ENCODE measurements at regions of chr12 and their contacts with region 1.

Region 1: GRCh38 chr12:63989301-63989845 is 144.9 kb downstream of the SRGAP1 start:
- DNase-seq: no peak
- H3K4me3 ChIP-seq: no peak overlapping the region
- H3K27ac ChIP-seq: no peak overlapping the region
- H3K4me1 ChIP-seq: peaks cover 41% of the 10 kb centered on the region
- H3K27me3 ChIP-seq: no peaks in the 10 kb centered on the region
- CTCF ChIP-seq: no peak

Region 2: GRCh38 chr12:63930971-63931370 is 58.4 kb before region 1 on chr12:
- CTCF ChIA-PET with region 1: no interaction called
- dilution Hi-C with region 1: loop called (anchors 5 kb)
- in situ Hi-C with region 1: no loop called
- intact Hi-C with region 1: no loop called
- DNase-seq: peak; percentile 65
- H3K4me3 ChIP-seq: no peak overlapping the region
- H3K27ac ChIP-seq: peak overlapping the region; percentile 57
- H3K4me1 ChIP-seq: peaks cover 18% of the 10 kb centered on the region
- H3K27me3 ChIP-seq: no peaks in the 10 kb centered on the region
- CTCF ChIP-seq: no peak